Mammary epithelial cell (primary cell): ENCODE measurements at regions of chr1 and their contacts with region 1.

Region 1: GRCh38 chr1:23867953-23868556 is at the start of gene FUCA1:
- DNase-seq: peak; percentile 82
- H3K4me3 ChIP-seq: peak within 1 kb of the TSS; percentile 36 to 71 (median 56)
- H3K27ac ChIP-seq: no peak within 1 kb of the TSS
- H3K4me1 ChIP-seq: peaks cover 29% of the 10 kb centered on the region
- H3K27me3 ChIP-seq: no peaks in the 10 kb centered on the region
- CTCF ChIP-seq: peak; percentile 95 to 97
- total RNA-seq, gene FUCA1: 3.3 to 9.9 TPM

Region 2: GRCh38 chr1:23772049-23772853 is 95.8 kb before region 1 on chr1:
- CTCF ChIA-PET with region 1: no interaction called
- dilution Hi-C with region 1: no loop called
- in situ Hi-C with region 1: no loop called
- intact Hi-C with region 1: loop called (anchors 1 kb)
- DNase-seq: peak; percentile 66
- H3K4me3 ChIP-seq: no peak overlapping the region
- H3K27ac ChIP-seq: no peak overlapping the region
- H3K4me1 ChIP-seq: peaks cover 2% of the 10 kb centered on the region
- H3K27me3 ChIP-seq: no peaks in the 10 kb centered on the region
- CTCF ChIP-seq: peak; percentile 97 to 99

Region 3: GRCh38 chr1:23800400-23801337 is 67.4 kb before region 1 on chr1 and contains the start of gene GALE:
- CTCF ChIA-PET with region 1: no interaction called
- dilution Hi-C with region 1: no loop called
- in situ Hi-C with region 1: no loop called
- intact Hi-C with region 1: loop called (anchors 2 kb)
- DNase-seq: peak; percentile 94
- H3K4me3 ChIP-seq: peak within 1 kb of the TSS; percentile 72 to 89 (median 77)
- H3K27ac ChIP-seq: peak within 1 kb of the TSS; percentile 75
- H3K4me1 ChIP-seq: peaks cover 21% of the 10 kb centered on the region
- H3K27me3 ChIP-seq: no peaks in the 10 kb centered on the region
- CTCF ChIP-seq: no peak
- total RNA-seq, gene GALE: 24.2 to 84.5 TPM

Region 4: DNA sequence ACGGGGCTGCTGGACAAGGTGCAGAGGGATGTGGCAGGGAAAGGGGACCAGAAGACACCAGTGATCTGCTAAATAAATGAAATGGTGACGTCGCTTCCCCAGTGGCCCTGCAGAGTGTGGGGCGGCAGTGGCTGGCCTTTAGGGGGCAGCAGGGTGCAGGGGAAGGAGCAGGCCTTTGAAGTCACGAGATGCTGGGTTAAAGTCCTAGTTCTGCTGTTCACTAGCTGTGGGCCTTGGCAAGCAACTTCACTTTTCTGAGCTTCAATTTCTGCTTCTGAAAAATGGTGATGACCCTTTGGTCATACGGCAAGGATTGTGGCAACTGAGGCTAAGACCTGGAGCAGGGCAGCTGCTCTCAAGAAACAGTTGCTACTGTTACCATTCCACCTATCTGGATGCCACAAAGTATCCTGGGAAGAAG is 58.3 kb before region 1 on chr1:
- CTCF ChIA-PET with region 1: interaction called, 5 read pairs
- dilution Hi-C with region 1: no loop called
- in situ Hi-C with region 1: no loop called
- intact Hi-C with region 1: loop called (anchors 1 kb)
- DNase-seq: peak; percentile 45
- H3K4me3 ChIP-seq: no peak overlapping the region
- H3K27ac ChIP-seq: no peak overlapping the region
- H3K4me1 ChIP-seq: no peaks in the 10 kb centered on the region
- H3K27me3 ChIP-seq: no peaks in the 10 kb centered on the region
- CTCF ChIP-seq: peak; percentile 91

Region 5: GRCh38 chr1:23825076-23825761 is 42.8 kb before region 1 on chr1 and contains the start of gene HMGCL:
- CTCF ChIA-PET with region 1: no interaction called
- dilution Hi-C with region 1: loop called (anchors 5 kb)
- in situ Hi-C with region 1: no loop called
- intact Hi-C with region 1: loop called (anchors 2 kb)
- DNase-seq: peak; percentile 83
- H3K4me3 ChIP-seq: peak within 1 kb of the TSS; percentile 77 to 98 (median 97)
- H3K27ac ChIP-seq: peak within 1 kb of the TSS; percentile 72
- H3K4me1 ChIP-seq: peaks cover 7% of the 10 kb centered on the region
- H3K27me3 ChIP-seq: no peaks in the 10 kb centered on the region
- CTCF ChIP-seq: no peak
- total RNA-seq, gene HMGCL: 31.5 to 33.0 TPM

Region 6: DNA sequence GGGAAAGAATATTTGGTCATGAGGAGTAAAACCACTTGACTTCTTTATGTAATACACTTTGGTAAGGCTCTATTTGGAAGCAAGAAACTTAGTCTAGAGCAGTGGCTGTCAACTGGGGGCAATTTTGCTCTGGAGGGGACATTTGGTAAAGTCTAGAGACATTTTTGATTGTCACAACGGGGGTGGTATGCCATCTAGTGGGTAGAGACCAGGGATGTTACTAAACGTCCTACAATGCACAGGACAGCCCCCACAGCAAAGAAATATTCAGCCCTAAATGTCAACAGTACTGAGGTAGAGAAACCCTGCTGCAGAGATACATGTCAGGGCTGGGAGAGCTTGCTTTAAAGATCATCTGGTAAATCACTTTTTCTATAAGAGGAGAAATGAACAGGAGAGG is 13.5 kb before region 1 on chr1:
- CTCF ChIA-PET with region 1: no interaction called
- dilution Hi-C with region 1: no loop called
- in situ Hi-C with region 1: no loop called
- intact Hi-C with region 1: no loop called
- DNase-seq: no peak
- H3K4me3 ChIP-seq: no peak overlapping the region
- H3K27ac ChIP-seq: no peak overlapping the region
- H3K4me1 ChIP-seq: no peaks in the 10 kb centered on the region
- H3K27me3 ChIP-seq: no peaks in the 10 kb centered on the region
- CTCF ChIP-seq: peak in 1 of 2 donors; percentile 36

Region 7: DNA sequence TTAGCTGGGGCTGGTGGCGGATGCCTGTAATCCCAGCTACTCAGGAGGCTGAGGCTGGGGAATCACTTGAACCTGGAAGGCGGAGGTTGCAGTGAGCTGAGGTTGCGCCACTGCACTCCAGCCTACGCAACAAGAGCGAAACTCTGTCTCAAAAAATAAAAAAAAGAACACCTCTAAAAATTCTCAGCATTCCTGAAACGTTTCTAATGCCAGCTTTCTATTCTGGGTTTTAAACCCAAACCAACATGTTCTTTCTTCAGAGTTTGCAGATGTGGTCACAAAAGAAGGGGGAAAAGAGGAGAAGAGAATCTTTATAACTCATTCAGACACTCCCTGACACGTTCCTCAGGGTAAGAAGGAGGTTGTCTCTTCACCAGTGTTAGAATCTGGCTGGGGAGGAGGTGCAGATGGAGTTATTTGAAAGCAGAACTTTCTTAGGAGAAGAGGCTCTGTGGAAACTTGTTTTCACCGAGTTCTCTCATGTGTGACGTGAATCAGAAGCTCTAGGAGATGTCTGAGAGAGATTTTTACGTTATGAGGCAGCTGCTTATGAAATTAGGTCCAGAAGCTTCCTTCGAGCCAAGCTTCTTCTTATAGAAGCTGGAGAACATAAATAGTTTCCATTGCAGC is 62.9 kb after region 1 on chr1:
- CTCF ChIA-PET with region 1: no interaction called
- dilution Hi-C with region 1: no loop called
- in situ Hi-C with region 1: no loop called
- intact Hi-C with region 1: loop called (anchors 5 kb)
- DNase-seq: peak; percentile 75
- H3K4me3 ChIP-seq: peak overlapping the region; percentile 27 to 30 (median 27)
- H3K27ac ChIP-seq: peak overlapping the region; percentile 73
- H3K4me1 ChIP-seq: peaks cover 8% of the 10 kb centered on the region
- H3K27me3 ChIP-seq: no peaks in the 10 kb centered on the region
- CTCF ChIP-seq: no peak